ENCODE measurements at regions of chr11 and their contacts with region 1.

Region 1: DNA sequence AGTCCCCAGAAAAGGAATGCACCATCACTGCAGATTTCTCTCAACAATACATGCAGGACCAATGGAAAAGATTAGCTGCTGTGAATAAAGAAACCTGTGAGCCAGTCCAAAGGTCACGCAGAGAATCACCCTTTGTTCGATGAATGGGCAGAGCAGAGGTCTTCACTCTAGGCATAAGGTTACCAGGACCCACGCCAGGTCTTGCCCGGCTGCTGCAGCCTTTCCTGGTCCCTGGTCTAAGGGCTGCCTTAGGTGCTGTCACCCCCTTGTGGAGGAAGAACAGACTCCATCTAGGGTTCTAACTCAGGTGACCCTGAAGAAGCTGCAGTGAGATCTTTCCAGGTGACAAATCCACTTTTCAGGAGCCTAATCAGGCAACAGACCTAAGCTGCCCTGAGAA is 29.0 kb upstream of the NAP1L4 start:
- DNase-seq: peak in 8 of 9 experiments; percentile 24 to 75 (median 61)
- ATAC-seq: peak; percentile 83
- H3K4me3 ChIP-seq: no peak overlapping the region
- H3K4me3 Mint-ChIP-seq: no peak overlapping the region
- H3K27ac ChIP-seq: no peak overlapping the region
- H3K27ac Mint-ChIP-seq: no peak overlapping the region
- H3K4me1 ChIP-seq: peaks cover 56% of the 10 kb centered on the region
- H3K4me1 Mint-ChIP-seq: peaks cover 64% of the 10 kb centered on the region
- H3K27me3 ChIP-seq: no peaks in the 10 kb centered on the region
- H3K27me3 Mint-ChIP-seq: no peaks in the 10 kb centered on the region
- CTCF ChIP-seq: peak; percentile 75

Region 2: GRCh38 chr11:2826679-2827056 is 194.5 kb before region 1 on chr11:
- CTCF ChIA-PET with region 1: no interaction called
- POLR2A ChIA-PET with region 1: no interaction called
- intact Hi-C with region 1: no loop called
- DNase-seq: no peak
- ATAC-seq: no peak
- H3K4me3 ChIP-seq: no peak overlapping the region
- H3K4me3 Mint-ChIP-seq: no peak overlapping the region
- H3K27ac ChIP-seq: no peak overlapping the region
- H3K27ac Mint-ChIP-seq: no peak overlapping the region
- H3K4me1 ChIP-seq: no peaks in the 10 kb centered on the region
- H3K4me1 Mint-ChIP-seq: peaks cover 5% of the 10 kb centered on the region
- H3K27me3 ChIP-seq: no peaks in the 10 kb centered on the region
- H3K27me3 Mint-ChIP-seq: peaks cover 4% of the 10 kb centered on the region
- CTCF ChIP-seq: no peak

Region 3: GRCh38 chr11:2951231-2952110 is 69.7 kb before region 1 on chr11:
- CTCF ChIA-PET with region 1: interaction called, 20 read pairs
- POLR2A ChIA-PET with region 1: interaction called, 4 read pairs
- intact Hi-C with region 1: no loop called
- DNase-seq: no peak
- ATAC-seq: no peak
- H3K4me3 ChIP-seq: no peak overlapping the region
- H3K4me3 Mint-ChIP-seq: no peak overlapping the region
- H3K27ac ChIP-seq: no peak overlapping the region
- H3K27ac Mint-ChIP-seq: peak overlapping the region; percentile 13
- H3K4me1 ChIP-seq: peaks cover 4% of the 10 kb centered on the region
- H3K4me1 Mint-ChIP-seq: peaks cover 37% of the 10 kb centered on the region
- H3K27me3 ChIP-seq: no peaks in the 10 kb centered on the region
- H3K27me3 Mint-ChIP-seq: no peaks in the 10 kb centered on the region
- CTCF ChIP-seq: no peak

Region 4: DNA sequence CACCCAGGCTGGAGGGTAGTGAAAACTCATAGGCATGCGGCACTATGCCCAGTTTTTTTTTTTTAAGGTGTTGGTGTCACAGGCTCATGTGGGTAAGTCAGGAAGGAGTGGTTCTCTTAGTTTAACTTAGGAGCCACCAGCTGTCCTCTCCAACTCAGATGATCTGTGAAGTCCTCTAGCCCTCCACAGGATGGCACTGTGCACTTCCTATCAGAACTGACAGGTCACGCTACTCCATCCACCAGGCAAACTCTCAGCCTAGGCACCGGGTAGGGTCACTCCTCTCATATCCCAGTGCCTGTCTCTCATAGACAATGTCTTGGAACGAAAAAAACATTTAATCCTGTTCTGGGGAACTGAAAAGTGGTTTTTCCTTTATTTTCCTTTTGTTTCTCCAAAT is 45.5 kb before region 1 on chr11:
- CTCF ChIA-PET with region 1: interaction called, 92 read pairs
- POLR2A ChIA-PET with region 1: interaction called, 5 read pairs
- intact Hi-C with region 1: loop called (anchors 1 kb)
- DNase-seq: peak in 8 of 9 experiments; percentile 21 to 79 (median 62)
- ATAC-seq: peak; percentile 96
- H3K4me3 ChIP-seq: no peak overlapping the region
- H3K4me3 Mint-ChIP-seq: no peak overlapping the region
- H3K27ac ChIP-seq: no peak overlapping the region
- H3K27ac Mint-ChIP-seq: peak overlapping the region; percentile 73
- H3K4me1 ChIP-seq: peaks cover 25% of the 10 kb centered on the region
- H3K4me1 Mint-ChIP-seq: peaks cover 65% of the 10 kb centered on the region
- H3K27me3 ChIP-seq: no peaks in the 10 kb centered on the region
- H3K27me3 Mint-ChIP-seq: no peaks in the 10 kb centered on the region
- CTCF ChIP-seq: peak; percentile 60

Region 5: GRCh38 chr11:2992234-2992996 is 28.7 kb before region 1 on chr11 and contains the start of gene NAP1L4:
- CTCF ChIA-PET with region 1: interaction called, 47 read pairs
- POLR2A ChIA-PET with region 1: interaction called, 132 read pairs
- intact Hi-C with region 1: loop called in 1 of 2 experiments (anchors 1 kb)
- DNase-seq: peak; percentile 87 to 99 (median 97)
- ATAC-seq: peak; percentile 81
- H3K4me3 ChIP-seq: peak within 1 kb of the TSS; percentile 80 to 85
- H3K4me3 Mint-ChIP-seq: peak within 1 kb of the TSS; percentile 97
- H3K27ac ChIP-seq: peak within 1 kb of the TSS; percentile 74 to 75
- H3K27ac Mint-ChIP-seq: peak within 1 kb of the TSS; percentile 98
- H3K4me1 ChIP-seq: peaks cover 19% of the 10 kb centered on the region
- H3K4me1 Mint-ChIP-seq: peaks cover 27% of the 10 kb centered on the region
- H3K27me3 ChIP-seq: no peaks in the 10 kb centered on the region
- H3K27me3 Mint-ChIP-seq: no peaks in the 10 kb centered on the region
- CTCF ChIP-seq: no peak
- total RNA-seq, gene NAP1L4: 276 to 290 TPM

Measured in CD8-positive, alpha-beta T cell (primary cell).